H1 (cell line): ENCODE measurements at regions of chr20 and their contacts with region 1.

Region 1: DNA sequence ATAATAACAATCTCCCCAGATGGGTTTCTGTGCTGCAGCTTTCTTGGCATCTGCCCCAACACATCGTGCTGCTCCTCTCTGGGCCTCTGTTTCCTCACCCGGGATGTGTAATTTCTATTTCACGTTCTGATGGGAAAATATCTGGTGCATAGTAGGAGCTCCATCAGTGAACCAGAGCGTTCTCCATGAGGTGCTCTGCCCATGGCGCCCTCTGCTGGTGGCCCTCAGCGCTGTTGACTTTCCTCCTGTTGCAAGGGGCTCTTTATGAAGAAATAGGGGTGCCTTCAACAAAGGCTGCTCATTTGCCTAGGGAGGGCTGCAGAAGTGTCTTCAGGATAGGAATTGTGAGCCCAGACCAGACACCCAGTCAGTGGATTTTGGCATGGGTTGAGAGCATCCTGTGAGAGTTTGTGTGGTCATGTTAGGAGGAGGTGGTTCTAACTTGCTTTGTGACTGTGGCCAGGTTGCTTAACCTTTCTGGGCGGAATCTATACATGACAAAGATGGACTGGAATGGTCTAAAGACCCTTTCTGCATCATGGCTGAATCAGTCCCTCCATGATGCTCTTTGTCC is 8.1 kb downstream of the SCRT2 start:
- DNase-seq: peak in 1 of 2 experiments; percentile 93
- H3K4me3 ChIP-seq: no peak overlapping the region
- H3K27ac ChIP-seq: no peak overlapping the region
- H3K4me1 ChIP-seq: peaks cover 2 to 21% (median 13%) of the 10 kb centered on the region in 4 experiments
- H3K27me3 ChIP-seq: peaks cover 8 to 26% (median 22%) of the 10 kb centered on the region in 4 experiments
- CTCF ChIP-seq: peak; percentile 87 to 96 (median 92)
- EP300 ChIP-seq: no peak
- POLR2A ChIP-seq: no peak
- RAD21 ChIP-seq: peak; percentile 64 to 79

Region 2: GRCh38 chr20:602111-602970 is 65.1 kb before region 1 on chr20:
- CTCF ChIA-PET with region 1: interaction called, 11 read pairs
- POLR2A ChIA-PET with region 1: no interaction called
- DNase-seq: no peak
- H3K4me3 ChIP-seq: no peak overlapping the region
- H3K27ac ChIP-seq: no peak overlapping the region
- H3K4me1 ChIP-seq: no peaks in the 10 kb centered on the region
- H3K27me3 ChIP-seq: no peaks in the 10 kb centered on the region
- CTCF ChIP-seq: no peak
- EP300 ChIP-seq: no peak
- POLR2A ChIP-seq: no peak
- RAD21 ChIP-seq: no peak

Region 3: GRCh38 chr20:653110-653589 is 14.3 kb before region 1 on chr20 and contains the start of gene SRXN1:
- CTCF ChIA-PET with region 1: interaction called, 157 read pairs
- POLR2A ChIA-PET with region 1: interaction called, 19 read pairs
- DNase-seq: peak; percentile 58 to 90
- H3K4me3 ChIP-seq: peak within 1 kb of the TSS; percentile 37 to 72 (median 68)
- H3K27ac ChIP-seq: no peak within 1 kb of the TSS
- H3K4me1 ChIP-seq: peaks cover 12 to 21% (median 15%) of the 10 kb centered on the region in 4 experiments
- H3K27me3 ChIP-seq: peaks cover 0 to 7% (median 0%) of the 10 kb centered on the region in 4 experiments; a peak in 3 of 7 replicates
- CTCF ChIP-seq: peak; percentile 67 to 99 (median 78)
- EP300 ChIP-seq: peak in 1 of 2 experiments; percentile 75; a peak in 1 of 3 replicates
- POLR2A ChIP-seq: no peak
- RAD21 ChIP-seq: peak; percentile 63 to 82
- total RNA-seq, gene SRXN1: 15.8 and 16.7 TPM in 2 replicates

Region 4: DNA sequence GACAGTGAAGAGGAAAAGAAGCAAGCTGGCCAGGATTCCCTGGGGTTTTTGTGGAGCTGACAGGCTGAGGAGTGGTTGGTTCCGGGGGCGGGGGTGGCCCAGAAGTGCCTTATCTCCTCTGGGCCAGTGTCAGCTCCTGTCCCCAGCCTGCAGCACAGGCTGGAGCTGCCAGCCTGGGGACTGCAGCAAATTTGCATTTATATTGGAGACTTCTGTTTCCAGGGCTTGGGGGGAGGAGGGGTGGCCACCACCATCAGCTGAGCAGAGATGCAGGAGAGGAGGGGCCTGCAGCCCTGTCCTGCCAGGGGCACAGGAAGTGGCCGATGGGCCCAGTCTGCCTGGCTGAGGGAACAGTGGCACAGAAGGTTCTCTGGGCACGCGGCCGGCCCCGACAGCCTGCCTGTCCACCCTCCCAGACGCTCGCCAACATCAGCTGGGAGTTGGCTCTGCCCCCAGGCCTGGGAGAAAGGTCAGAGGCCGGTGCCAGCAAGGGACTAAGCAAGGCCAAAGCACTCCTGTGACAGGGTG is 32.4 kb after region 1 on chr20:
- CTCF ChIA-PET with region 1: interaction called, 17 read pairs
- POLR2A ChIA-PET with region 1: no interaction called
- DNase-seq: no peak
- H3K4me3 ChIP-seq: no peak overlapping the region
- H3K27ac ChIP-seq: no peak overlapping the region
- H3K4me1 ChIP-seq: peaks cover 7 to 15% (median 10%) of the 10 kb centered on the region in 4 experiments
- H3K27me3 ChIP-seq: no peaks in the 10 kb centered on the region
- CTCF ChIP-seq: no peak
- EP300 ChIP-seq: no peak
- POLR2A ChIP-seq: no peak
- RAD21 ChIP-seq: no peak

Region 5: GRCh38 chr20:719816-720215 is 52.3 kb after region 1 on chr20:
- CTCF ChIA-PET with region 1: interaction called, 23 read pairs
- POLR2A ChIA-PET with region 1: interaction called, 3 read pairs
- DNase-seq: no peak
- H3K4me3 ChIP-seq: no peak overlapping the region
- H3K27ac ChIP-seq: no peak overlapping the region
- H3K4me1 ChIP-seq: no peaks in the 10 kb centered on the region; a peak in 2 of 7 replicates
- H3K27me3 ChIP-seq: peaks cover 0 to 3% (median 0%) of the 10 kb centered on the region in 4 experiments; a peak in 2 of 7 replicates
- CTCF ChIP-seq: no peak
- EP300 ChIP-seq: no peak
- POLR2A ChIP-seq: no peak
- RAD21 ChIP-seq: no peak

Region 6: GRCh38 chr20:740141-740540 is 72.7 kb after region 1 on chr20:
- CTCF ChIA-PET with region 1: interaction called, 22 read pairs
- POLR2A ChIA-PET with region 1: interaction called, 5 read pairs
- DNase-seq: no peak
- H3K4me3 ChIP-seq: no peak overlapping the region
- H3K27ac ChIP-seq: no peak overlapping the region
- H3K4me1 ChIP-seq: peaks cover 0 to 1% (median 0%) of the 10 kb centered on the region in 4 experiments; a peak in 1 of 7 replicates
- H3K27me3 ChIP-seq: 0 out of 7 replicates have a peak, but pooled peaks cover 0 to 2% (median 0%) of the 10 kb centered on the region in 4 experiments
- CTCF ChIP-seq: no peak
- EP300 ChIP-seq: no peak
- POLR2A ChIP-seq: no peak
- RAD21 ChIP-seq: no peak